Endothelial cell of umbilical vein (primary cell): ENCODE measurements at regions of chr9 and their contacts with region 1.

Region 1: DNA sequence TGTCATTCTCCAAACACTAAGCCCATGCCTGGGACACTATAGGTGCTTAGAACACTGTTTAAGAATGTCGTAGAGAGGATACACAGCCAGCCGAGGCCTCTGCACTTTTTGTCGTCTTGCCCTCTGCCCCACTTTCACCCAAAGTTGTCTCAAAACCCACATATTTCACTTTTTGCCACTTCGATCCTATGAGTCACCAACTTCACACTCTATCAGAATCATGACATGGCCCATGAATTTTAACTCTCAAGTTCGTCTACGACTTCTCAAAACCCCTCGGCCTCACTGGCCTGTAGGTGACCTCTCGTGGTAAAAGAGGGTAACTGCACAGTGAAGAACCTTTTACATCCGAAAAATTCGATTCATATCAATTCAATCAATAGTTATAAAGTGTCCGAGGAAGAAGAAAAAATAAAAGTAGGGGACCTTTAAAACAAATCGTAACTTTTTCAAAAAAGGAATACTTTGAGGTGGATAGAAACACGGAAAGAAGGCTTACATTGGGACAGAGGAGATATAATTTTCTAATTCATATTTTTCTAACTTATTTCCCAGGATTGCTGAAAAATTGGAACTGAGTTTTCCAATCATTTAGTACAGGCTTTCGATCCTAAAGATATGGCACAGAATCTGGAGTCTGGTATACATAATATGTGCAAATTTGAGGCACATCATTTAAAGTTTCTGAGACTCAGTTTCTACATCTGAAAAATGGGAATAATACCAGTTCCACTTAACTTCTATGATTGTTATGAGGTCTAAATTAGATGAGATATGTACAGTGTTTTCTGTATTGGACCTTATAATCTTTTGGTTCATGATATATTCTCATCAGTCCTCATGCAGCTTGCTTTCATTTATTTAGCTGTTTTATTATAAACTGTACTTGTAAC is 122.6 kb downstream of the APBA1 start:
- DNase-seq: peak; percentile 67
- H3K4me3 ChIP-seq: no peak overlapping the region
- H3K27ac ChIP-seq: no peak overlapping the region
- H3K4me1 ChIP-seq: no peaks in the 10 kb centered on the region
- H3K27me3 ChIP-seq: peaks cover 6 to 8% of the 10 kb centered on the region in 2 experiments
- CTCF ChIP-seq: peak; percentile 79 to 87
- POLR2A ChIP-seq: no peak

Region 2: DNA sequence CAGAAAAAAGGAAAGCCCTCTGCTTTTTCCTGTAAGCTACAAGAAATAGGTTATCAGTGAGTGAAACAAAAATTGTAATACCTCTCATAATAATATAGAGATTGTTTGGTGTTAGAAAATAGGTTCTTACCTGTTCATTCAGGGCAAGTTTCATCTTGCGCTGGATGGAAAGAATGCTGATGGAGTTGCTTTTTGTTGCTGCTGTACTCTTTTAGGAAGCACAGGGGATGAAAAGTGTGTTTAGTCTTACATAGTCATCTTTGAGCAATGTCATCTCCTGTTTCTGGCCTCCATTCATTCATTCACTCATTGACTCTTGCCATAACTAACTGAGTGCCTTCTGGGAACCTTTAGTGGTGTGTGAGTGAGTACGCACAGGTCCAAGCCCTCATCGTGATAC is 218.1 kb before region 1 on chr9:
- CTCF ChIA-PET with region 1: no interaction called
- POLR2A ChIA-PET with region 1: no interaction called
- dilution Hi-C with region 1: no loop called
- intact Hi-C with region 1: no loop called
- DNase-seq: no peak
- H3K4me3 ChIP-seq: no peak overlapping the region
- H3K27ac ChIP-seq: no peak overlapping the region
- H3K4me1 ChIP-seq: no peaks in the 10 kb centered on the region
- H3K27me3 ChIP-seq: peaks cover 0 to 2% of the 10 kb centered on the region in 2 experiments
- CTCF ChIP-seq: no peak
- POLR2A ChIP-seq: no peak

Region 3: DNA sequence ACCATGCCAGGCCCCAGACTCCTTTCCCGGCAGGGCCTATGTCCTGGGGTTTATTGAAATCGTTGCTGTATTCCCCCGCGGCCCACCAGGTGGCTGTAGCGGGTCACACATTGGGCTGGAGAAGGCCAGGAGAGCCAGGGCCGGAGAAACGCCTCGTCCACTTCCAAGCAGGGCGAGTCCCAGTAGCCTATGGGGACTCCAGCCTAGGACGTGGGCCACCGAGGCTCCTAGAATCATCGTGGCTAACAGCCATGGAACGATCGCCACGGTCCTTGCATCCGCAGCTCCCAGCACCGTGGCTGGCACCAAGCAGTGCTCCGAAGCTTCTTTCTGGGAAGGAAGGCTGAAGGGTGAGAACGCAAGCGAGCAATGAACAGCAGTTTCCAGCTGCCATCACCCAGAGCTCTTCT is 136.8 kb before region 1 on chr9:
- CTCF ChIA-PET with region 1: interaction called, 11 read pairs
- POLR2A ChIA-PET with region 1: no interaction called
- dilution Hi-C with region 1: no loop called
- intact Hi-C with region 1: no loop called
- DNase-seq: peak; percentile 74
- H3K4me3 ChIP-seq: no peak overlapping the region
- H3K27ac ChIP-seq: no peak overlapping the region
- H3K4me1 ChIP-seq: no peaks in the 10 kb centered on the region
- H3K27me3 ChIP-seq: no peaks in the 10 kb centered on the region
- CTCF ChIP-seq: peak; percentile 79 to 81
- POLR2A ChIP-seq: no peak

Region 4: DNA sequence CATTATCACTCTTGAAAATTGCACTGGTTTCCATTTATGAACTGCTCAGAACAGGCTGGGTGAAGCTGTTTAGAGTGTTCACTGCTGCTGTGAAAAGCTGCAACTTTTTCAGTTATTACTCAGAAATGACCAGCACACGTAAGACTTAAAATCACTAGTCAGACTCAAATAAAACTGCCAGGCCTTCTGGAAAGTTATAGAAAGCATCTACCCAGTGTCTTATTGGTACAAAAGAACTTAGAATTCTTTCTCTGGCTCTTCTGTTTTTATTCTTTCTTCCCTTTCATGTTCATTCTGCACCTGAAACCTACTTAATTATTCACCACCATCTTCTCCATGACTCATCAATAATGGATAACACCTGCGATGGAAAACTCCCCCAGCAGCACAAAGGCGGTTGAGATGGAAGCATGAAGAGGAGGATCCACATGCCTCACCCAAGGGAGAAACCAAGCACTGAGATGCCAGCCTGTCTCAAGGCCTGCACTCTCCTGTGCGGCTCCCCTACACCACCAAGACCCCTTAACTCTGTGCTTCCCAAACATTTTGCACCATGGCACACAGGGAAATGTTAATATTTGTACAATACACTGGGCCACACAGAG is 52.6 kb before region 1 on chr9:
- CTCF ChIA-PET with region 1: no interaction called
- POLR2A ChIA-PET with region 1: no interaction called
- dilution Hi-C with region 1: no loop called
- intact Hi-C with region 1: loop called (anchors 10 kb)
- DNase-seq: no peak
- H3K4me3 ChIP-seq: no peak overlapping the region
- H3K27ac ChIP-seq: no peak overlapping the region
- H3K4me1 ChIP-seq: peaks cover 7% of the 10 kb centered on the region
- H3K27me3 ChIP-seq: no peaks in the 10 kb centered on the region
- CTCF ChIP-seq: no peak
- POLR2A ChIP-seq: no peak

Region 5: GRCh38 chr9:69573651-69574050 is 24.1 kb after region 1 on chr9:
- CTCF ChIA-PET with region 1: interaction called, 6 read pairs
- POLR2A ChIA-PET with region 1: no interaction called
- dilution Hi-C with region 1: no loop called
- intact Hi-C with region 1: loop called (anchors 1 kb)
- DNase-seq: peak; percentile 85
- H3K4me3 ChIP-seq: no peak overlapping the region
- H3K27ac ChIP-seq: peak overlapping the region; percentile 82
- H3K4me1 ChIP-seq: peaks cover 43% of the 10 kb centered on the region
- H3K27me3 ChIP-seq: no peaks in the 10 kb centered on the region
- CTCF ChIP-seq: no peak
- POLR2A ChIP-seq: no peak

Region 6: DNA sequence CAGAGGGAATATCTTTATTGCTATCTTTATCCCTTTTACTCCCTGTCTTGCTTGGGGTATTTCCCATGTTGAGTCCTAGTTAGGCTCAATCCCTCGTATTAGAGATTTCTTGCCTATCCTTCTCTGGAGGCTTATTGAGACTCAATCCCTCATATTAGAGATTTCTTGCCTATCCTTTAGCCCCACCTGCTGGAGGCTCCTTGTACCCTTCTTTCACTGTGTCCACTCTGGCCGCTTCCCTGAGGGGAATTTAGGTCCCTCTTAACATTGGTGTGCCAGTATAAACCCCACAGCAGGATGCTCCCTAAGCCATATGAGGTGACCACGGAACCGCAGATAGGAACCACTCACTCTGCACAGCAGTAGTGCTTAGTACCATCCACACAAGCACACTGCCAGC is 383.3 kb after region 1 on chr9:
- CTCF ChIA-PET with region 1: interaction called, 9 read pairs
- POLR2A ChIA-PET with region 1: no interaction called
- dilution Hi-C with region 1: no loop called
- intact Hi-C with region 1: loop called (anchors 1 kb)
- DNase-seq: peak; percentile 44
- H3K4me3 ChIP-seq: no peak overlapping the region
- H3K27ac ChIP-seq: no peak overlapping the region
- H3K4me1 ChIP-seq: no peaks in the 10 kb centered on the region
- H3K27me3 ChIP-seq: peaks cover 4% of the 10 kb centered on the region in 2 experiments
- CTCF ChIP-seq: peak; percentile 28 to 48
- POLR2A ChIP-seq: no peak